Activated naive CD4-positive, alpha-beta T cell treated with anti-CD3 and anti-CD28 coated beads for 36 hours (primary cell): ENCODE measurements at regions of chr12 and their contacts with region 1.

Region 1: DNA sequence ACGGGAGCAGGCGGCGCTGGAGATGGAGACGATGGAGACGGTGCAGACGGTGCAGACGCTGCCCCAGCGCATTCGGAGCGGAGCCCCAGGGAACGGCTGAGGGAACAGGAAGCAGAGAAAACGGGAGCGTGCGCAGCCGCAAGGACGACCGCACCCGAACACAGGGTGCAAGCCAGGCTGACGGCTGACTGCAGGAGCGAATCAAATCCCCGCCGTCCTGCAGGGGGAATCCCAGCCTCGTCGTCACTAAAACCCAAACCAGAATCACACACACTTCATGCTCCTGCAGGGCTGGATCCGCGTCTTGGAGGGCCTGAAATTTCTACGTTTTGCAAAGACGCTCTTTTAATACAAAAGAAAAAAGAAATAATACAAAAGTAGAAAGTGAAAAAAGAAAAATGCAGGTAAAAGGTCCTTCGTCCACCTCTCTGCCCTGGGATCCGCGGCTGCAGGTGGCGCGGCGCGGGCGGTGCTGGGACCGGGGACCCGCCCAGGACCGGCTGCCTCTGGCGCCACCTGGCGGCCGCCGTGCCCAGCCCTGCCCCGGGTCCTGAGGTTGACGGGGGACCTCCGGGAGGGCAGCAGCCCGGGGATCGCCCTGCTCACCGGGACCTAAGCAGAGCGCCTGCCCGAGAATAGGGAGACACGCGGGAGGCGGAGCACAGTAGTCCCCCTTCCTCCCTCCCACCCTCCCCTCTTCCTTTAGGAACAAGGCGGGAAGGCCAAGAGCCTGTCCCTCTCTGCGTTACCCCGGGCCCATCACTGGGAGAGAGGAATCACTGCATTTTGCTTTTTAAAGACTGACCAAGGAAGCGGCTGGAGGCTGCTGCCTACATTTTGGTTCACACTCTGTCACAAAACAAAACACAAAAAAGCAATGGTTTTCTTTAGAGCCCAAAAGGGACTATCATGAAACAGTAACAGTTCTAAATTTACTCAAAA is 20.1 kb downstream of the STX2 start:
- DNase-seq: peak; percentile 79
- H3K4me3 Mint-ChIP-seq: peak overlapping the region; percentile 91
- H3K27ac Mint-ChIP-seq: peak overlapping the region; percentile 73
- H3K4me1 Mint-ChIP-seq: peaks cover 7% of the 10 kb centered on the region
- H3K27me3 Mint-ChIP-seq: no peaks in the 10 kb centered on the region

Region 2: GRCh38 chr12:130041983-130042812 is 776.7 kb before region 1 on chr12:
- CTCF ChIA-PET with region 1: interaction called, 5 read pairs
- intact Hi-C with region 1: loop called (anchors 5 kb)
- DNase-seq: peak; percentile 77
- H3K4me3 Mint-ChIP-seq: no peak overlapping the region
- H3K27ac Mint-ChIP-seq: no peak overlapping the region
- H3K4me1 Mint-ChIP-seq: no peaks in the 10 kb centered on the region
- H3K27me3 Mint-ChIP-seq: peaks cover 65% of the 10 kb centered on the region

Region 3: DNA sequence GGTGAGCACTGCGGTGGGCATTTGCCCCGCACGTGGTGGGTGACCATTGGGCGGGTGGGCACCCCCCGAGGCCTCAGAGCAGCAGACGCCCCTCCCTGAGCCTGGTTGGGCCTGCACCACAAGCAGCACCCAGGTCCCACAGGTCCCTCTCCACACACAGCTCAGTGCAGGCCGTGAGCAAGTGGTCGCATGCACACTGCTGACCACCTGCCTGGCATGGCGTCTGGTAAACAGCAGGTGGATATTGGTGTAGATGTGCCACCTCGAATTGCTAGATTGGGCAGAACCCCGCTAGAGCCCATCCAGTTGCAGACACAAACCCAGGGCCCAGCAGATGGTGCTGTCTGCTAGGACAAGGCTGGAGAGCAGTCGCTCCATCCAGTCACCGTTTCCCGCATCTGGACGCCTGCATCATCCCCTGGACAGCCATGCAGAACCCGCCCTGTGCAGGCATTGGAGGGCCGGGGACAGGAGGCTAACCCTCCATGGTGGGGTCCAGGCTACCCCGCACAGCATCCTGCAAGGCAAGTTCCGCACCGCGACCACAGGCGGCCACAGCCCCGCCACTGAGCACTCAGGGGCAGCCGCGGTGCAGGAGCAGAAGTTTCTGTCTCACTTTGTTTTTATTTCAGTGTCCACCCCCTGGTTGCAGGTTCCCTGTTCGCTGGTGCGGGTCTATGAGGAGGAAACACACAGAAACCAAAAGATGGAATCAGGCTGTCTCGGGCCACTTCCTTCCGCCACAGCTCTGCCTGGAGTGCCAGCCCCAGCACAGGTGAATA is 57.2 kb before region 1 on chr12:
- CTCF ChIA-PET with region 1: interaction called, 6 read pairs
- intact Hi-C with region 1: loop called (anchors 1 kb)
- DNase-seq: peak; percentile 79
- H3K4me3 Mint-ChIP-seq: peak overlapping the region; percentile 58
- H3K27ac Mint-ChIP-seq: no peak overlapping the region
- H3K4me1 Mint-ChIP-seq: no peaks in the 10 kb centered on the region
- H3K27me3 Mint-ChIP-seq: peaks cover 8% of the 10 kb centered on the region

Region 4: GRCh38 chr12:130775953-130776856 is 42.7 kb before region 1 on chr12:
- CTCF ChIA-PET with region 1: interaction called, 4 read pairs
- intact Hi-C with region 1: loop called (anchors 1 kb)
- DNase-seq: peak; percentile 80
- H3K4me3 Mint-ChIP-seq: peak overlapping the region; percentile 26
- H3K27ac Mint-ChIP-seq: no peak overlapping the region
- H3K4me1 Mint-ChIP-seq: peaks cover 14% of the 10 kb centered on the region
- H3K27me3 Mint-ChIP-seq: peaks cover 26% of the 10 kb centered on the region

Region 5: GRCh38 chr12:130838951-130839769 is 20.3 kb after region 1 on chr12 and contains the start of gene STX2:
- CTCF ChIA-PET with region 1: interaction called, 3 read pairs
- intact Hi-C with region 1: loop called (anchors 2 kb)
- DNase-seq: peak; percentile 84
- H3K4me3 Mint-ChIP-seq: peak within 1 kb of the TSS; percentile 78
- H3K27ac Mint-ChIP-seq: peak within 1 kb of the TSS; percentile 21
- H3K4me1 Mint-ChIP-seq: peaks cover 29% of the 10 kb centered on the region
- H3K27me3 Mint-ChIP-seq: no peaks in the 10 kb centered on the region
- total RNA-seq, gene STX2: 10.8 to 13.6 TPM

Region 6: GRCh38 chr12:131061041-131061806 is 242.3 kb after region 1 on chr12:
- CTCF ChIA-PET with region 1: no interaction called
- intact Hi-C with region 1: no loop called
- DNase-seq: no peak
- H3K4me3 Mint-ChIP-seq: no peak overlapping the region
- H3K27ac Mint-ChIP-seq: no peak overlapping the region
- H3K4me1 Mint-ChIP-seq: no peaks in the 10 kb centered on the region
- H3K27me3 Mint-ChIP-seq: peaks cover 4% of the 10 kb centered on the region

Region 7: DNA sequence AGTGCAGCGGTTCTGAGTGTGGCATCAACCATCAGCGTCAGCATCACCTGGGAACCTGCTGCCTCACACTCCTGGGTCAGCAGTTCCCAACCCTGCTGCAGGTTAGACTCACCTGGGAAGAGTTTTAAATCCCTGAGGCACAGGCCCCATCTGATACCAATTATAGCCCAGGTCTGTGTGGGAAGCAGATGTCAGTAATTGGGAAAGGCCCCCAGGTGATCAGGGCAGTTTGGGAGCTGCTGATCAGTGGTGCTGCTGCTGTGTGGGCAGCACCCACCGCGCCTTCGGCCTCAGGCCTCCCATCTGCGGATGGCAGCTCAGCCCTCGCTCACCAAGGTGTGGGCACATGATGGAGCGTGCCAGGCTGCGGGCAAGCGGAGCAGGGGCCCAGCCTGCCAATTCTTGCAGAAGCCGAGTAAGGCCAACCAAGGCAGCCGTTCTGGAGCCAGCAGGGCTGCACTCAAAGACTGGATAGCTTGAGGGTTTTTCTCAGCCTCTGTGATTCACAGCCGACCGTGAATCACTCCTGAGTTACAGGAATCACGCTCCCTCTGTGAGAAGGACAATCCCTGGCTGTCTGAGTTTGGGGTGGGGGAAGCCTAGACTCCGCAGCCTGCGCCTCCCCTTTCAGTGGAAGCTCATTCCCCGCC is 736.4 kb after region 1 on chr12:
- CTCF ChIA-PET with region 1: no interaction called
- intact Hi-C with region 1: no loop called
- DNase-seq: no peak
- H3K4me3 Mint-ChIP-seq: no peak overlapping the region
- H3K27ac Mint-ChIP-seq: no peak overlapping the region
- H3K4me1 Mint-ChIP-seq: no peaks in the 10 kb centered on the region
- H3K27me3 Mint-ChIP-seq: no peaks in the 10 kb centered on the region